Psoas muscle (tissue), 8 donors: ENCODE measurements at regions of chr1 and their contacts with region 1.

Region 1: DNA sequence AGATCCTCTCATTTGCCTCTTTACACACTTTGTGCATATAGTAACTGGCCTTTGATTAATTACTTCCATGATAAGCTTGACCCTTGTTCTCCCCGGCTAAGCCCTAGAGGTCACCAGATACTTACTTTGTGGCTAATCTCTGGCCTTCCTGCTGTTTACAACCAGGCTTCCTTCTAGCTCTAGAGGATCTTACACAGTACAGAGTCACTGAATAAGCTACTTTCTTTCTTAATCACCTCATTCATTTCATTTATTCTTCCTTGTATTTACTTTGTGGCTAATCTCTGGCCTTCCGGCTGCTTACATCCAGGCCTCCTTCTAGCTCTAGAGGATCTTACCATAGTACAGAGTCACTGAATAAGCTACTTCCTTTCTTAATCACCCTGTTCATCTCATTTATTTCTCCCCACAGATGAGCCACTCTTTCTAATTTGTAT is 144.3 kb upstream of the C1orf21 start:
- DNase-seq: no peak
- ATAC-seq: peak; percentile 58 to 94 (median 85)
- H3K4me3 ChIP-seq: no peak overlapping the region
- H3K27ac ChIP-seq: peak overlapping the region; percentile 39
- H3K4me1 ChIP-seq: peaks cover 12% of the 10 kb centered on the region
- H3K27me3 ChIP-seq: no peaks in the 10 kb centered on the region
- CTCF ChIP-seq: peak; percentile 37

Region 2: GRCh38 chr1:184329962-184330868 is 87.7 kb after region 1 on chr1:
- intact Hi-C with region 1: no loop called
- DNase-seq: no peak
- ATAC-seq: peak in 1 of 4 donors; percentile 33
- H3K4me3 ChIP-seq: no peak overlapping the region
- H3K27ac ChIP-seq: no peak overlapping the region
- H3K4me1 ChIP-seq: no peaks in the 10 kb centered on the region
- H3K27me3 ChIP-seq: no peaks in the 10 kb centered on the region
- CTCF ChIP-seq: no peak

Region 3: DNA sequence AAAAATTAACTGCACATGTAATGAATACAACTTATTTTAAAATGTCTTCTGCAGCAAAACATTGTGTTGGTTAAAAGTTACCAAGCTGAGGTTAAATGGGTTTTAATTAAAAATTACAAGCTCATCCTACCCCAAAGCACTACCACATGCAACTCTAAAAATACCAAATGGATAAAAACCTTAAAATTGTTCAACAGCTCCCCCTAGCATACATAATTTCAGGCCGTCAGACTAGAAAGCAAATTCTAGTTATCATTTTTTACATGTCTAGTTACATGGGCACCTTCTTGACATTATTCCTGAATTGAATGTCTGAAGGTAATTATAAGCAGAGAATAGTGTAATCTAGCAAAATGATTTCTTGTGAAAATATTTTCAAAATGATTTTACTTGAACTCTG is 320.8 kb after region 1 on chr1:
- intact Hi-C with region 1: loop called in 1 of 2 experiments (anchors 5 kb)
- DNase-seq: no peak
- ATAC-seq: peak in 1 of 4 donors; percentile 39
- H3K4me3 ChIP-seq: no peak overlapping the region
- H3K27ac ChIP-seq: no peak overlapping the region
- H3K4me1 ChIP-seq: peaks cover 29% of the 10 kb centered on the region
- H3K27me3 ChIP-seq: no peaks in the 10 kb centered on the region
- CTCF ChIP-seq: peak; percentile 46